ENCODE measurements at regions of chr11 and their contacts with region 1.

Region 1: DNA sequence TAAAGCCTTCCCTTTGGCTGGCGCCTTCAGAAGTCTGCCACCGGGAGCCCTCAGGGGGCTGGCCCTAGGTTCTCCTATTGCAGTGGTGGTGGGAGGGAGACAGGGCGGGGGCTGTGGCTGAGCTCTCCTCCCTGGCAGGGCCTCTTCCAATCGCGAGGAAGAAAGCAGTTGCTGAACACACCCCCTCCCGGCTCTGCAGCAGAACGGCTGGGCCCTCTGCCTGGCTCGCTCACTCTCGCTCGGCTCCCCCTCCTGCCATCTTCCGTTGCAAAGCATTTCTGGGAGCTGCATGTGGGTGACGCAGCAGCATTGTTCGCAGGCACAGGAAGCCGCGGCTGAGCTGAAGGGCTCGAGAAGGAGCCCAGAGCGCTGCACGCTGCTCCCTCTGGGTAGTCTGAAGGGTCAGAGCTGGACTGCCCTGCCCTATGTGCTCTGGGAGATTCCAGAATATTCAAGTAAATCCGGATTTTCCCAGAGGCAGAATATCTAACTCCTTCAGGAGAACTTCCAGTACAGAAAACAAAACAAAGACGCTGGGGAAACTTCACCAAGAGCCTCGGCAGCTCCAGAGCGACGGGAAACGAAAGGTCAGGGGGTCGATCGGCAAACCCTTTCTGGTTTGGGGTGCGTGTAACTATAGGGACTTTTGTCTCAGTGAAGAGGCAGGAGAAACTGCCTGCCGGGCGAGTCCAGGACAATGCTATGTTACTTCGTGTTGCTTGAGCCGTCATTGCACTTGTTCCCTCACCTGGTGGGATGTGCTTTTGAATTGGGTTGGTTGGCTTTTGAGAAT is 26.3 kb upstream of the GRK2 start:
- DNase-seq: peak; percentile 96
- ATAC-seq: peak; percentile 97
- H3K4me3 ChIP-seq: peak overlapping the region; percentile 72 to 82 (median 80)
- H3K27ac ChIP-seq: peak overlapping the region; percentile 89
- H3K4me1 ChIP-seq: peaks cover 41% of the 10 kb centered on the region
- H3K27me3 ChIP-seq: no peaks in the 10 kb centered on the region; a peak in 1 of 5 replicates
- CTCF ChIP-seq: peak; percentile 41
- EP300 ChIP-seq: 0 out of 4 replicates have a peak, but pooled peaks of 1 of the 2 experiments have one; percentile 11
- POLR2A ChIP-seq: peak; percentile 96 to 97
- RAD21 ChIP-seq: peak; percentile 62

Region 2: DNA sequence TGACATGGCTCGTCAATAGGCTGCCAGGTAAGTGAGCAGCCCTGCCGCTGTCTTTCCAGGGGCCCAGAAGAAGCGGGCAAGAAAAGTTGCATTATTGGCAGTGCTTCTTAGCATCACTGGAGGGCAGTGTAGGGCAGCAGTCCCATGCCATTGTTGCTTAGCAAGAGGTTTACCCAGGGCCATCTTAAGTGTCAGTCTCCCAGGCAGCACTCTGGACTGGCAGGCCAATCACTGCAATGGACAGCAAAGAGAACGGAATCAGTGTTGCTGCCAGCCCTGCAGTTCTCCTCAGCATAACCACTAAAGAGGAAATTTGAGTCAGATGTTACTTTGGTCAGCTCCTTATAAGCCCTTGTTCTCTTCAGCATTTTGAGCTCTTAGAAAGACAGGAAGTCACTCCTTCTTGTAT is 12.9 kb after region 1 on chr11:
- CTCF ChIA-PET with region 1: no interaction called
- POLR2A ChIA-PET with region 1: interaction called, 14 read pairs
- in situ Hi-C with region 1: no loop called
- intact Hi-C with region 1: no loop called
- DNase-seq: no peak
- ATAC-seq: peak; percentile 19
- H3K4me3 ChIP-seq: no peak overlapping the region
- H3K27ac ChIP-seq: no peak overlapping the region
- H3K4me1 ChIP-seq: peaks cover 64% of the 10 kb centered on the region
- H3K27me3 ChIP-seq: no peaks in the 10 kb centered on the region
- CTCF ChIP-seq: peak; percentile 67
- EP300 ChIP-seq: no peak
- POLR2A ChIP-seq: 0 out of 4 replicates have a peak, but pooled peaks of 1 of the 2 experiments have one; percentile 1
- RAD21 ChIP-seq: peak; percentile 50; the same call in 1 of the 2 replicates

Region 3: DNA sequence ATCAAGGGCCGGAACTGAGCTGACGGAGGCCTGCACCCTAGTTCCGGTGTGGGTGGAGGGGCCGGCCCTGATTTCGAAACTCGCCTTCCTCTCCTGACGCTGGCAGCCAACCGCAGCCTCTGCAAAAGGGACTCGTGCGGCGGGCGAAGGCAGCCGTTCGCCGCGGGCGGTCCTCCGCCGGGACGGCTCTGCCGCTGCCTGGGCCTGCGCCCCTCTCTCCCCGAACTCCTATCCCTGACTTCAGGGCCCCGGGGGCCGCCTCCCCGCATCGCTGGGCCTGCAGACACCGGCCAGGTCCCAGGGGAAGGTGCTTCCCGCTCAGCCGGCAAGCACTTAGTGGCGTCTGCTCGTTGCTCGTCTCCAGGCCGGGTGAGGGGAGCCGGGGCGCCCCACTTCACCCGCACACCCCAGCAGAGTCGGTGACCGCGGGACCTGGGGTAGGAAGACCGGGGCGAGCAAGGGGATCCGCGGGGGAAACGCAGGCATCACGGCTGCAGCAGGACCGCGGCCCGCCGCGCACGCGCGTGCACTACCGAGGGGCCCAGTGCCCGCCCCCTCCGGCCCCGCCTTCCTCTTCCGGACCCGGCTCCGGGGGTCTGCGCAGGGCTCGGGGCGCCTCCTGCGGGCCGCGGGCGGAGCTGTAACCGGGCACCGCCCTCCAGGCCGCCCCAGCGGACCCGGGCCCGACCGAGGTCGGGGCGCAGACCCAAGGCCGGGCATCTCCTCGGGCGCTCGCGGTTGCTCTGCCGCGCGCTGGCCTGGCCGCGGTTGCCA is 48.7 kb after region 1 on chr11:
- CTCF ChIA-PET with region 1: no interaction called
- POLR2A ChIA-PET with region 1: interaction called, 16 read pairs
- in situ Hi-C with region 1: no loop called
- intact Hi-C with region 1: no loop called
- DNase-seq: peak; percentile 85
- ATAC-seq: peak; percentile 80
- H3K4me3 ChIP-seq: peak overlapping the region; percentile 69 to 94 (median 91)
- H3K27ac ChIP-seq: peak overlapping the region; percentile 100
- H3K4me1 ChIP-seq: peaks cover 37% of the 10 kb centered on the region
- H3K27me3 ChIP-seq: no peaks in the 10 kb centered on the region
- CTCF ChIP-seq: peak; percentile 74
- EP300 ChIP-seq: peak in 1 of 2 experiments; percentile 67; a peak in 2 of 4 replicates
- POLR2A ChIP-seq: peak in 1 of 2 experiments; percentile 88; a peak in 2 of 4 replicates
- RAD21 ChIP-seq: peak; percentile 88

Region 4: GRCh38 chr11:67382276-67383136 is 142.5 kb after region 1 on chr11:
- CTCF ChIA-PET with region 1: no interaction called
- POLR2A ChIA-PET with region 1: no interaction called
- in situ Hi-C with region 1: no loop called
- intact Hi-C with region 1: loop called (anchors 10 kb)
- DNase-seq: peak; percentile 67
- ATAC-seq: peak; percentile 86
- H3K4me3 ChIP-seq: no peak overlapping the region
- H3K27ac ChIP-seq: no peak overlapping the region
- H3K4me1 ChIP-seq: peaks cover 30% of the 10 kb centered on the region
- H3K27me3 ChIP-seq: peaks cover 1 to 40% of the 10 kb centered on the region in 2 experiments; a peak in 3 of 5 replicates
- CTCF ChIP-seq: peak; percentile 97
- EP300 ChIP-seq: no peak
- POLR2A ChIP-seq: no peak
- RAD21 ChIP-seq: peak; percentile 92

Measured in HepG2 (cell line).